ENCODE measurements at regions of chr16 and their contacts with region 1.

Region 1: DNA sequence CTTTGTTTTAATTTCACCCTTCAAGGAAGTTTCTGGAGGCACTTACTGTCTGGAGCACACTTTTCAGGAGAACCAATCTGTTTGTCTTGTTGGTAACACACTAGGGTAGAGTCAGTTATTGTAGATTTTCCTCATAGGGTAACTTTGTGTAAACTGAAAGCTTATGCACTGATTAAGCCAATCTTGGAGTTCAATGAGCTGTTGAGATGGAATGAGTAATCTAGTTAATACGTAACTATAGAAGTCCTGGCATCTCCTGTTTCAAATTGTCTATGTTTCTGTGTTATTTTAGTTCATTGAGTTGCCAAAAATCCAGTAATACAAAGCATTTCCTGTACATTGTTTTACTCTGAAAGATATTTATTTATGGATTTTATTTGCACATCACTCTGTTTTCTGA is 111.6 kb upstream of the HAS3 start:
- DNase-seq: peak in 1 of 2 experiments; percentile 70
- H3K4me3 ChIP-seq: no peak overlapping the region
- H3K27ac ChIP-seq: peak overlapping the region; percentile 59
- H3K4me1 ChIP-seq: peaks cover 52% of the 10 kb centered on the region
- H3K27me3 ChIP-seq: no peaks in the 10 kb centered on the region
- CTCF ChIP-seq: no peak

Region 2: DNA sequence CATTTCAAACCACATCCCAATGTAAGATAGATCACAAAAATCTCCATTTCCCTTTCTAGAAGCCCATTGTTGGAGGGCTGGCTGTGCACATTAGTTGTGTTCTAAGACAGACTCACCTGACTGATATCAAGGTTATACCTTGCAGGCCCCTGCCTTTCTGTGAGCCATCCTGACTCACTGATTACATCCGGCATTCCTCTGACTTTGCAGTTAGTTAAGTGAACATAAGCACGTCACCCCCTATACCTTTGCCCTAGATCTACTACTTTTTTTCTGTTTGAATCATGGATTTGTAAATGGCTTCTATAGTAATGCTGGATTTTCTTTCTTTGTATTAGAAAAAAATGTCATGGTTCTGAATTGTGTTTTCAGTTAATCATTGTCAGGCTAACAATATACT is 72.2 kb before region 1 on chr16:
- CTCF ChIA-PET with region 1: no interaction called
- POLR2A ChIA-PET with region 1: interaction called, 4 read pairs
- intact Hi-C with region 1: loop called (anchors 2 kb)
- DNase-seq: peak; percentile 67 to 97
- H3K4me3 ChIP-seq: peak overlapping the region; percentile 8; the same call in 1 of the 2 replicates
- H3K27ac ChIP-seq: peak overlapping the region; percentile 96
- H3K4me1 ChIP-seq: peaks cover 49% of the 10 kb centered on the region
- H3K27me3 ChIP-seq: no peaks in the 10 kb centered on the region
- CTCF ChIP-seq: no peak

Region 3: DNA sequence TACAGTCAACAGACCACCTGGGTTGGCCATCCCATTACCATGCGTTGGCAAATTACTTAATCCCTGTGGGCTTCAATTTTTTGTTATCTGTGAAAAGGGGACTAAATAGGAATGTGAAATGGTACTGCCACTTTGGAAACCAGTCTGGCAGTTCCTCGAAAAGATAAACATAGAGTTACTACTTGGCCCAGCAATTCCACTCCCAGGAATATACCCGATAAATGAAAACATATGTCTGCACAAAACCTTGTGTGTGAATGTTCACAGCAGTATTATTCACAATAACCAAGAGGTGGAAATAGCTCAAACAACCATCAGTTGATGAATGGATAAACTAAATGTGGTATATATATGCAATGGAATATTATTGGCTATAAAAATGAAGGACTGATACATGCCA is 62.7 kb before region 1 on chr16:
- CTCF ChIA-PET with region 1: interaction called, 3 read pairs
- POLR2A ChIA-PET with region 1: interaction called, 12 read pairs
- intact Hi-C with region 1: no loop called
- DNase-seq: no peak
- H3K4me3 ChIP-seq: no peak overlapping the region
- H3K27ac ChIP-seq: peak overlapping the region; percentile 91
- H3K4me1 ChIP-seq: peaks cover 26% of the 10 kb centered on the region
- H3K27me3 ChIP-seq: no peaks in the 10 kb centered on the region
- CTCF ChIP-seq: no peak

Region 4: DNA sequence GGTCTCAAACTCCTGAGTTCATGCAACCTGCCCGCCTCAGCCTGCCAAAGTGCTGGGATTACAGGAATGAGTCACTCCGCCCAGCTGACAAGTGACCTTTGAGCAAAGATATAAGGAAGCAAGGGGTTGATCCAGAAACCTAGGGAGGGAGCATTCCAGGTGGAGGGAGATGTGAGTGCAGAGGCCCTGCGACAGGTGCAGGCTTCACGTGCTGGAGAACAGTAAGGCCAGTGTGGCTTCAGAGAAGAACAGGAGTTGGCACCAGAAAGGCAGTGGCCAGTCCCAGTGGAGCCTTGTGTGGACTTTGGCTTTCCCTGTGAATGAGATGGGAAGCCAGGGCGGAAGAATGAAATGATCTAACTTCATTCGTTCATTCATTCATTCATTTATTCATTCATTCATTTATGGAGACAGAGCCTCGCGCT is 38.0 kb after region 1 on chr16:
- CTCF ChIA-PET with region 1: interaction called, 11 read pairs
- POLR2A ChIA-PET with region 1: no interaction called
- intact Hi-C with region 1: no loop called
- DNase-seq: peak; percentile 31 to 67
- H3K4me3 ChIP-seq: no peak overlapping the region
- H3K27ac ChIP-seq: no peak overlapping the region
- H3K4me1 ChIP-seq: peaks cover 9% of the 10 kb centered on the region; the same call in 1 of the 2 replicates
- H3K27me3 ChIP-seq: no peaks in the 10 kb centered on the region
- CTCF ChIP-seq: no peak

Region 5: GRCh38 chr16:69077251-69077650 is 83.4 kb after region 1 on chr16:
- CTCF ChIA-PET with region 1: interaction called, 3 read pairs
- POLR2A ChIA-PET with region 1: no interaction called
- intact Hi-C with region 1: loop called (anchors 5 kb)
- DNase-seq: peak; percentile 56 to 86
- H3K4me3 ChIP-seq: no peak overlapping the region
- H3K27ac ChIP-seq: peak overlapping the region; percentile 56
- H3K4me1 ChIP-seq: peaks cover 31% of the 10 kb centered on the region
- H3K27me3 ChIP-seq: no peaks in the 10 kb centered on the region
- CTCF ChIP-seq: no peak

Region 6: GRCh38 chr16:69105489-69106361 is 111.8 kb after region 1 on chr16 and contains the start of gene HAS3:
- CTCF ChIA-PET with region 1: no interaction called
- POLR2A ChIA-PET with region 1: no interaction called
- intact Hi-C with region 1: loop called (anchors 5 kb)
- DNase-seq: peak; percentile 66 to 71
- H3K4me3 ChIP-seq: peak within 1 kb of the TSS; percentile 93
- H3K27ac ChIP-seq: no peak within 1 kb of the TSS
- H3K4me1 ChIP-seq: peaks cover 14% of the 10 kb centered on the region; the same call in 1 of the 2 replicates
- H3K27me3 ChIP-seq: no peaks in the 10 kb centered on the region
- CTCF ChIP-seq: peak; percentile 62; the same call in 1 of the 2 replicates
- total RNA-seq, gene HAS3: 2.5 and 2.7 TPM in 2 replicates